ENCODE measurements at regions of chr2 and their contacts with region 1.

Region 1: GRCh38 chr2:227479865-227480475 is 8.0 kb downstream of the AGFG1 start:
- DNase-seq: no peak
- ATAC-seq: peak; percentile 64
- H3K4me3 ChIP-seq: peak overlapping the region; percentile 12; the same call in 1 of the 2 replicates
- H3K27ac ChIP-seq: peak overlapping the region; percentile 68
- H3K4me1 ChIP-seq: peaks cover 32% of the 10 kb centered on the region
- H3K27me3 ChIP-seq: no peaks in the 10 kb centered on the region
- CTCF ChIP-seq: peak; percentile 28 to 65 (median 56); a peak in 5 of 6 replicates
- EP300 ChIP-seq: no peak
- POLR2A ChIP-seq: no peak
- RAD21 ChIP-seq: peak; percentile 65

Region 2: GRCh38 chr2:227460070-227460485 is 19.9 kb before region 1 on chr2:
- CTCF ChIA-PET with region 1: interaction called, 48 read pairs
- POLR2A ChIA-PET with region 1: interaction called, 7 read pairs
- RAD21 ChIA-PET with region 1: interaction called, 10 read pairs
- SMC1A ChIA-PET with region 1: interaction called, 12 read pairs
- in situ Hi-C with region 1: no loop called
- intact Hi-C with region 1: no loop called
- DNase-seq: no peak
- ATAC-seq: peak; percentile 67
- H3K4me3 ChIP-seq: no peak overlapping the region
- H3K27ac ChIP-seq: peak overlapping the region; percentile 54
- H3K4me1 ChIP-seq: peaks cover 55% of the 10 kb centered on the region
- H3K27me3 ChIP-seq: no peaks in the 10 kb centered on the region
- CTCF ChIP-seq: no peak
- EP300 ChIP-seq: peak; percentile 59 to 65; a peak in 2 of 4 replicates
- POLR2A ChIP-seq: no peak
- RAD21 ChIP-seq: no peak

Region 3: GRCh38 chr2:227534714-227535113 is 54.7 kb after region 1 on chr2:
- CTCF ChIA-PET with region 1: interaction called, 7 read pairs
- POLR2A ChIA-PET with region 1: no interaction called
- RAD21 ChIA-PET with region 1: interaction called, 3 read pairs
- SMC1A ChIA-PET with region 1: interaction called, 4 read pairs
- in situ Hi-C with region 1: no loop called
- intact Hi-C with region 1: loop called (anchors 5 kb)
- DNase-seq: peak; percentile 40
- ATAC-seq: peak; percentile 86
- H3K4me3 ChIP-seq: no peak overlapping the region
- H3K27ac ChIP-seq: no peak overlapping the region
- H3K4me1 ChIP-seq: peaks cover 18% of the 10 kb centered on the region
- H3K27me3 ChIP-seq: no peaks in the 10 kb centered on the region
- CTCF ChIP-seq: no peak
- EP300 ChIP-seq: no peak
- POLR2A ChIP-seq: no peak
- RAD21 ChIP-seq: no peak

Region 4: DNA sequence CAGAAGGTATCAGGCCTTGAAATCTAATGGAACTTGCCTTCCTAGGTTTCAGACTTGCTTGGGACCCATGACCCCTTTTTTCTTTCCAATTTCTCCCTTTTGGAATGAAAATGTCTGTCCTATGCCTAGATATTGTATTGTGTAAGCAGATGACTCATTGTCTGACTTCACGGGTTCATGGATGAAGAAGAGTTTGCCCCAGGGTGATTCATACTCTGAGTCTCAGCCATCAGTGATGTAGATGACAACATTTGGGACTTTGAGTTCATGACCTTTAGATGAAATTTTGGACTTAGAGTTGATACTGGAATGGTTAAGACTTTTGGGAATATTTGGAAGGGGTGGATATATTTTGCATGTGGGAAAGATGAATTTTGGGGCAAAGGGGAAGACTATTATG is 175.5 kb after region 1 on chr2:
- CTCF ChIA-PET with region 1: interaction called, 28 read pairs
- POLR2A ChIA-PET with region 1: no interaction called
- RAD21 ChIA-PET with region 1: interaction called, 6 read pairs
- SMC1A ChIA-PET with region 1: interaction called, 11 read pairs
- in situ Hi-C with region 1: no loop called
- intact Hi-C with region 1: loop called (anchors 2 kb)
- DNase-seq: no peak
- ATAC-seq: peak; percentile 53
- H3K4me3 ChIP-seq: no peak overlapping the region
- H3K27ac ChIP-seq: no peak overlapping the region
- H3K4me1 ChIP-seq: no peaks in the 10 kb centered on the region
- H3K27me3 ChIP-seq: no peaks in the 10 kb centered on the region
- CTCF ChIP-seq: no peak
- EP300 ChIP-seq: no peak
- POLR2A ChIP-seq: no peak
- RAD21 ChIP-seq: no peak

Region 5: DNA sequence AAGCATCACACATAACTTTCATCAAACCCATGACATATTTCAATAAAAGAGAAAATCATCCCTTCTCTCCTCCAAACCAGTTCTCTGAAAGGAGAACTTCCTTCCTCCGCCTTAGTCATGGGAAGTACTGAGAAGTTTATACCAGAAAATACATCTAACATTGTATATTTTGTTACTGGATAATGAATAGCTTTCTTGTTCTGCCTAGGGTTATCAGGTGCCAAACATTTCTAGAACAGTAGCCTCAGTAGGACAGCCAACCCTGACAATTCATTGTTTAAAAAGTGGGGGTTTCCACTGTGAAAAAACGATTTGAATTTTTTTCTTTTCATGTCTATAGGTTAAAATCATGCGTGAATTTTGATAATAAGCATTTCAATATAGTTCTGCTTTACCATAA is 375.5 kb after region 1 on chr2:
- CTCF ChIA-PET with region 1: interaction called, 5 read pairs
- POLR2A ChIA-PET with region 1: interaction called, 3 read pairs
- RAD21 ChIA-PET with region 1: no interaction called
- SMC1A ChIA-PET with region 1: interaction called, 5 read pairs
- in situ Hi-C with region 1: no loop called
- intact Hi-C with region 1: loop called (anchors 5 kb)
- DNase-seq: no peak
- ATAC-seq: peak; percentile 76
- H3K4me3 ChIP-seq: no peak overlapping the region
- H3K27ac ChIP-seq: no peak overlapping the region
- H3K4me1 ChIP-seq: no peaks in the 10 kb centered on the region
- H3K27me3 ChIP-seq: no peaks in the 10 kb centered on the region
- CTCF ChIP-seq: no peak
- EP300 ChIP-seq: no peak
- POLR2A ChIP-seq: no peak
- RAD21 ChIP-seq: no peak

Measured in GM12878 (cell line).